GM12878 (cell line): ENCODE measurements at regions of chr20 and their contacts with region 1.

Region 1: GRCh38 chr20:51624157-51624731 is 81.7 kb upstream of the NFATC2 start:
- DNase-seq: no peak
- ATAC-seq: peak; percentile 83
- H3K4me3 ChIP-seq: no peak overlapping the region
- H3K27ac ChIP-seq: no peak overlapping the region
- H3K4me1 ChIP-seq: peaks cover 22% of the 10 kb centered on the region
- H3K27me3 ChIP-seq: no peaks in the 10 kb centered on the region; a peak in 1 of 4 replicates
- CTCF ChIP-seq: peak; percentile 72 to 82 (median 80); a peak in 5 of 6 replicates
- EP300 ChIP-seq: no peak
- POLR2A ChIP-seq: no peak
- RAD21 ChIP-seq: peak; percentile 69

Region 2: GRCh38 chr20:51300104-51300503 is 324.1 kb before region 1 on chr20:
- CTCF ChIA-PET with region 1: no interaction called
- POLR2A ChIA-PET with region 1: no interaction called
- RAD21 ChIA-PET with region 1: no interaction called
- SMC1A ChIA-PET with region 1: no interaction called
- in situ Hi-C with region 1: no loop called
- intact Hi-C with region 1: no loop called
- DNase-seq: no peak
- ATAC-seq: no peak
- H3K4me3 ChIP-seq: no peak overlapping the region
- H3K27ac ChIP-seq: no peak overlapping the region
- H3K4me1 ChIP-seq: no peaks in the 10 kb centered on the region
- H3K27me3 ChIP-seq: peaks cover 0 to 1% of the 10 kb centered on the region in 2 experiments; a peak in 1 of 4 replicates
- CTCF ChIP-seq: no peak
- EP300 ChIP-seq: no peak
- POLR2A ChIP-seq: no peak
- RAD21 ChIP-seq: no peak

Region 3: DNA sequence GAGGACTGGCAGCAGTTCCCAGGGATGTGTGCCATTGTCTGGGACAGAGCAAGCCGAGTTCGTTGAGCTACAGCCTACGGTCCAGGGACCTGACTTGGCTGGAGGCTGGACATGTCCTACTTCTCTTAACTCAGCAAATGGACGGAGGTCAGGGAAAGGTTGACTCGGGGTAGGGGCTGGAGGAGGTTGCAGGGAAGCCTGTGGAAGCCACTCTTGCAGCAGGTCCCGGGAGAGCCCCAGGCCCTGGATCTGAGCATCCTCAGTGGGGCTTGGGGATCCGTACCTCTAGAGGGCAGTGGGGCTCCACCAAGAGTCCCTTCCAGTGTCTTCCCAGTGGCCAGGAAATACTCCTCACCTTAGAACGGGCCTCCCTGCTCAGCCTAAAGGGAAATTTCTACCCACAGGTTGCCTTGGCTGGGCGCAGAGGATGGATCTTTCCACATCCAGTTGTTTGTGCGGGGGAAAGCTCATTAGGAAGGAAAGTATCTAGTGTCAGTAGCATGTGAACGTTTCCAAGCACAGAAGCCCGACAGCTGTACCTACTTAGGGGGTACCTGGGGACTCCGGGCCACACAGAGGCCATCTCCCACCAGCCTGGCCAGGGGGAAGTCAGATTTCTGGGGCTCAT is 252.0 kb before region 1 on chr20:
- CTCF ChIA-PET with region 1: interaction called, 6 read pairs
- POLR2A ChIA-PET with region 1: no interaction called
- RAD21 ChIA-PET with region 1: interaction called, 10 read pairs
- SMC1A ChIA-PET with region 1: interaction called, 5 read pairs
- in situ Hi-C with region 1: loop called (anchors 5 kb)
- intact Hi-C with region 1: loop called (anchors 1 kb)
- DNase-seq: no peak
- ATAC-seq: peak; percentile 97
- H3K4me3 ChIP-seq: no peak overlapping the region
- H3K27ac ChIP-seq: no peak overlapping the region
- H3K4me1 ChIP-seq: no peaks in the 10 kb centered on the region
- H3K27me3 ChIP-seq: no peaks in the 10 kb centered on the region
- CTCF ChIP-seq: peak; percentile 84 to 87 (median 85)
- EP300 ChIP-seq: no peak
- POLR2A ChIP-seq: no peak
- RAD21 ChIP-seq: peak; percentile 90

Region 4: GRCh38 chr20:51871867-51872304 is 247.6 kb after region 1 on chr20:
- CTCF ChIA-PET with region 1: no interaction called
- POLR2A ChIA-PET with region 1: no interaction called
- RAD21 ChIA-PET with region 1: no interaction called
- SMC1A ChIA-PET with region 1: no interaction called
- in situ Hi-C with region 1: no loop called
- intact Hi-C with region 1: no loop called
- DNase-seq: no peak
- ATAC-seq: no peak
- H3K4me3 ChIP-seq: no peak overlapping the region
- H3K27ac ChIP-seq: no peak overlapping the region
- H3K4me1 ChIP-seq: no peaks in the 10 kb centered on the region
- H3K27me3 ChIP-seq: no peaks in the 10 kb centered on the region
- CTCF ChIP-seq: no peak
- EP300 ChIP-seq: no peak
- POLR2A ChIP-seq: no peak
- RAD21 ChIP-seq: no peak